ENCODE measurements at regions of chr5 and their contacts with region 1.

Region 1: DNA sequence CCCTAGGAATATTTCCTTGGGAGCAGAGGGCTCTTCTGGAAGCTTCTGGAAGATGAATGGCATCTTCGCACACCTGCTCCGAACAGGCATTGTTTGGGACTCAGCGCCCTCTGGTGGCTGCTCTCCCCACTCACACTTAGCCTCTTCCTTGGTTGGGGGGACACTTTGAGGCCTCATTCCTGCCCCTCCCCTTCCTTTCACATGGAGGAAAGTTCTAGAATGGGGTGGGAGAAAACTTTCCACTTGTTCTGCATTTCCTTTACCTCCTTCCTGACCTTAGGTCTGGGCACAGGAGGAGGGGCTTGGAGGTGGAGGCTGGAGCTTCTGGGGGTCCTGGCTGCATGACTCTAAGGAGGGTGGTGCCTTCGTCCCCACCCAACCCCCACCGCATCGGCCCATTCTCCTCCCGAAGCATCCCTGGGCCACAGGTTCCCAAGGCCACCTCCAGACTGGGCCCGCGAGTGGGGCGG is 19.3 kb upstream of the SMIM32 start:
- DNase-seq: peak in 1 of 2 experiments; percentile 84
- H3K4me3 ChIP-seq: no peak overlapping the region
- H3K27ac ChIP-seq: no peak overlapping the region
- H3K4me1 ChIP-seq: peaks cover 2 to 4% (median 3%) of the 10 kb centered on the region in 4 experiments; a peak in 3 of 7 replicates
- H3K27me3 ChIP-seq: peaks cover 0 to 15% (median 9%) of the 10 kb centered on the region in 4 experiments; a peak in 3 of 7 replicates
- CTCF ChIP-seq: peak; percentile 82 to 92 (median 88)
- EP300 ChIP-seq: no peak
- POLR2A ChIP-seq: no peak
- RAD21 ChIP-seq: peak; percentile 88 to 89

Region 2: GRCh38 chr5:135814812-135815211 is 397.5 kb before region 1 on chr5:
- CTCF ChIA-PET with region 1: no interaction called
- POLR2A ChIA-PET with region 1: no interaction called
- DNase-seq: no peak
- H3K4me3 ChIP-seq: no peak overlapping the region
- H3K27ac ChIP-seq: no peak overlapping the region
- H3K4me1 ChIP-seq: no peaks in the 10 kb centered on the region
- H3K27me3 ChIP-seq: no peaks in the 10 kb centered on the region
- CTCF ChIP-seq: no peak
- EP300 ChIP-seq: no peak
- POLR2A ChIP-seq: no peak
- RAD21 ChIP-seq: no peak

Region 3: DNA sequence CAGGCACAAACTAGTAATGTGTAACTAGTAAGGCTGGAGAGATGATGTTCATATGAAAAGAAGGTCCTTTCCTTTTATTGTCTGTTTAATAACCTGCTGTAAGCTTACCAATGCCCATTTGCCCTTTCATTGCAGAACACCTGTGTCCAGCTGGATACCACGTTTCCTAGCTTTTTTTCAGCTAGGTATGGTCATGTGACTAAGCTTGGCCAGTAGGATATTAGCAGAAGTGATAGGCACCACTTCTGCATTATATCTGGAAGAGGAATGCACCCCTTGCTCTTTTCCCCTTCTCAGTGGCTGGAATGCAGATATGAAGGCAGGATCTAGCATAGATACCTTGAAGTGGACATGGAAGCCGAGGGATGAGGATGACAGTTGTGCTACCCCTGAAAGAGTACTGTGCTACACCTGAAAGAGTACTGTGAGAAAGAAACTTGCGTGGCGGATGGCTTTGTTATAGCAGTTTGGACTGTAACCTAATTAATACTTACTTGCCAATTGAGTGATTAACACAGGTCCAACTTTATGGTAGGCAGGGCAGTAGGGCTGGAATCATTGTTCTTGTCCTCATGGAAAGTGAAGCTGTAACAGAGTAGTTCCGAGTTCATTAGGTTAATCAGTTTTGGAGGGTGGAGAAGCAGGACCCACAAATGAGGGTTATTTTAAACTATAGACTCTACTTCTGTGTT is 26.2 kb before region 1 on chr5:
- CTCF ChIA-PET with region 1: interaction called, 66 read pairs
- POLR2A ChIA-PET with region 1: no interaction called
- DNase-seq: no peak
- H3K4me3 ChIP-seq: no peak overlapping the region
- H3K27ac ChIP-seq: no peak overlapping the region
- H3K4me1 ChIP-seq: no peaks in the 10 kb centered on the region; a peak in 1 of 7 replicates
- H3K27me3 ChIP-seq: peaks cover 3 to 26% (median 16%) of the 10 kb centered on the region in 4 experiments
- CTCF ChIP-seq: no peak
- EP300 ChIP-seq: no peak
- POLR2A ChIP-seq: no peak
- RAD21 ChIP-seq: no peak

Region 4: DNA sequence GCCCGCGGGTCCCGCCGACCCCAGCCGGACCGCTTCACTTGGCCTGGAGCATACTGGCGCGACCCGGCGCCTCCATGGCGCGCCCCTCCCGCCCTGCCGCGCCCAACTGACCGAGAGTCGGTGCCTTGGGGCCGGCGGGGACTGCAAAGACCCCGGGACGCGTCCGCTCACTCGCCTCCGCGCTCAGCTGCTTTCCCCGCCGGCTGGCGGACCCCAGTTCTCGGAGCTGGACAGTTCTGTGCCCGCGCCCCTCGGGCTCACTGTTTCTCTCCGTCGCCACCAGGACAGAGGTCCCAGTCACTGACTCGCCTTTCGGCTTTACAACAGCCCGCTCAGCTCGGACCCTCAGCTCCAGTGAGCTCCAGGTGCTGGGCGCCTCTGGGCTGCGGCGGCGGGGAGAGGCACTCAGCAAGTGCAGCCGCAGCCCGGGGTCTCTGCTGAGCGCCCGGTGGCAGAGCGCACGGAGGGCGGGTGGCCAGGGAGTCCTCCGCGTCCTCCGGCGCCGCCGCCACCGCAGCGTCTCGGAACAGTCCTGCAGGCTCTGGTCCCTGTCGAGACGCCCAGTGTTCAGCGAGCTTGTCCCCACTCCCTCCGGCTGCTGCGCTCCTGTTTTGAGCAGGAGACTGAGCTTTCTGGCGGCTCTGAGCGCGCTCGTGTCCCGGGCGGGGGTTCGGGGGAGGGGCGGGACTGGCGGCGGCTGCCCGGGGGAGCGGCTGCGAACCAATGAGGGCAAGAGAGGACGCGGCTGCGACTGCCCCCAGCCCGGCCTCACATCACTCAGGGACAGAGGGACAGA is 19.6 kb before region 1 on chr5 and contains the start of gene SMIM32:
- CTCF ChIA-PET with region 1: interaction called, 66 read pairs
- POLR2A ChIA-PET with region 1: no interaction called
- DNase-seq: peak in 1 of 2 experiments; percentile 72
- H3K4me3 ChIP-seq: peak within 1 kb of the TSS; percentile 51 to 72 (median 63)
- H3K27ac ChIP-seq: no peak within 1 kb of the TSS
- H3K4me1 ChIP-seq: peaks cover 0 to 16% (median 7%) of the 10 kb centered on the region in 4 experiments; a peak in 6 of 7 replicates
- H3K27me3 ChIP-seq: peaks cover 48 to 81% (median 71%) of the 10 kb centered on the region in 4 experiments
- CTCF ChIP-seq: no peak
- EP300 ChIP-seq: no peak
- POLR2A ChIP-seq: no peak
- RAD21 ChIP-seq: no peak
- total RNA-seq, gene SMIM32: 0.22 TPM in 1 of 2 replicates, not detected in the other

Region 5: GRCh38 chr5:136222583-136223274 is 10.4 kb after region 1 on chr5:
- CTCF ChIA-PET with region 1: interaction called, 37 read pairs
- POLR2A ChIA-PET with region 1: no interaction called
- DNase-seq: no peak
- H3K4me3 ChIP-seq: no peak overlapping the region
- H3K27ac ChIP-seq: no peak overlapping the region
- H3K4me1 ChIP-seq: peaks cover 0 to 6% (median 0%) of the 10 kb centered on the region in 4 experiments; a peak in 1 of 7 replicates
- H3K27me3 ChIP-seq: no peaks in the 10 kb centered on the region; a peak in 1 of 7 replicates
- CTCF ChIP-seq: no peak
- EP300 ChIP-seq: no peak
- POLR2A ChIP-seq: no peak
- RAD21 ChIP-seq: no peak

Measured in H1 (cell line).